PC-3 (cell line): ENCODE measurements at regions of chr11 and their contacts with region 1.

Region 1: GRCh38 chr11:121194731-121195596 is 93.9 kb downstream of the TECTA start:
- DNase-seq: peak; percentile 91
- ATAC-seq: peak; percentile 97
- H3K4me3 ChIP-seq: peak overlapping the region; percentile 49
- H3K27ac ChIP-seq: no peak overlapping the region
- H3K4me1 ChIP-seq: peaks cover 6% of the 10 kb centered on the region; the same call in 1 of the 2 replicates
- H3K27me3 ChIP-seq: peaks cover 28% of the 10 kb centered on the region
- CTCF ChIP-seq: peak; percentile 96

Region 2: GRCh38 chr11:120511116-120511819 is 683.7 kb before region 1 on chr11 and contains the start of gene GRIK4:
- CTCF ChIA-PET with region 1: interaction called, 4 read pairs
- POLR2A ChIA-PET with region 1: no interaction called
- intact Hi-C with region 1: loop called (anchors 2 kb)
- DNase-seq: peak; percentile 80
- ATAC-seq: peak; percentile 90
- H3K4me3 ChIP-seq: peak within 1 kb of the TSS; percentile 51; the same call in 1 of the 2 replicates
- H3K27ac ChIP-seq: no peak within 1 kb of the TSS
- H3K4me1 ChIP-seq: no peaks in the 10 kb centered on the region
- H3K27me3 ChIP-seq: peaks cover 67% of the 10 kb centered on the region
- CTCF ChIP-seq: peak; percentile 95
- total RNA-seq, gene GRIK4: not detected in 2 replicates

Region 3: GRCh38 chr11:120912504-120912903 is 282.5 kb before region 1 on chr11:
- CTCF ChIA-PET with region 1: no interaction called
- POLR2A ChIA-PET with region 1: interaction called, 11 read pairs
- intact Hi-C with region 1: no loop called
- DNase-seq: peak; percentile 60
- ATAC-seq: peak; percentile 66
- H3K4me3 ChIP-seq: no peak overlapping the region
- H3K27ac ChIP-seq: no peak overlapping the region
- H3K4me1 ChIP-seq: no peaks in the 10 kb centered on the region
- H3K27me3 ChIP-seq: peaks cover 54% of the 10 kb centered on the region
- CTCF ChIP-seq: peak; percentile 64

Region 4: GRCh38 chr11:120929664-120930154 is 265.3 kb before region 1 on chr11:
- CTCF ChIA-PET with region 1: no interaction called
- POLR2A ChIA-PET with region 1: no interaction called
- intact Hi-C with region 1: loop called (anchors 1 kb)
- DNase-seq: peak; percentile 50
- ATAC-seq: peak; percentile 76
- H3K4me3 ChIP-seq: no peak overlapping the region
- H3K27ac ChIP-seq: no peak overlapping the region
- H3K4me1 ChIP-seq: no peaks in the 10 kb centered on the region
- H3K27me3 ChIP-seq: peaks cover 6% of the 10 kb centered on the region; the same call in 1 of the 2 replicates
- CTCF ChIP-seq: peak; percentile 92

Region 5: GRCh38 chr11:121032546-121032945 is 162.4 kb before region 1 on chr11:
- CTCF ChIA-PET with region 1: no interaction called
- POLR2A ChIA-PET with region 1: no interaction called
- intact Hi-C with region 1: loop called (anchors 10 kb)
- DNase-seq: peak; percentile 21
- ATAC-seq: peak; percentile 33; the same call in 1 of the 2 replicates
- H3K4me3 ChIP-seq: no peak overlapping the region
- H3K27ac ChIP-seq: no peak overlapping the region
- H3K4me1 ChIP-seq: peaks cover 10% of the 10 kb centered on the region
- H3K27me3 ChIP-seq: no peaks in the 10 kb centered on the region
- CTCF ChIP-seq: peak; percentile 56